OCI-LY7 (cell line): ENCODE measurements at regions of chr6 and their contacts with region 1.

Region 1: DNA sequence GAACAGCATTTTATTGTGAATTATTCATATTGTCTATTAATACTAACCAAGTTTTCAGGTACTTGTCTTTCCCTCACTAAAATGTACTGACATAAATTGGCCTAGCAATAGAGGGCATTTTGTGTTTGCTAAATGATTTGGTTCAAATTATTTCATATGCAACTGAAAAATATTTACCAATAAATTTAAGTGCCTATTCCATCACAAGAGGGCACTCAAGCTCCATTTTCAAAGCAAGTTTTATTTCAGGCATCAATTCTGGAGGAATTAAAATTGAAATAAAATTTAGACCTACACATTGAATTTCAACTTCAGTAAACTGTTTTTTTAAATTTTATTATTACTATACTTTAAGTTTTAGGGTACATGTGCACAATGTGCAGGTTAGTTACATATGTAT is 114.3 kb upstream of the SYNCRIP start:
- DNase-seq: peak; percentile 21
- H3K4me3 ChIP-seq: no peak overlapping the region
- H3K27ac ChIP-seq: no peak overlapping the region
- H3K4me1 ChIP-seq: no peaks in the 10 kb centered on the region
- CTCF ChIP-seq: peak; percentile 76

Region 2: GRCh38 chr6:86192123-86192522 is 435.1 kb after region 1 on chr6:
- CTCF ChIA-PET with region 1: no interaction called
- POLR2A ChIA-PET with region 1: no interaction called
- intact Hi-C with region 1: loop called (anchors 10 kb)
- DNase-seq: peak; percentile 30
- H3K4me3 ChIP-seq: no peak overlapping the region
- H3K27ac ChIP-seq: no peak overlapping the region
- H3K4me1 ChIP-seq: no peaks in the 10 kb centered on the region
- CTCF ChIP-seq: peak; percentile 77